ENCODE measurements at regions of chr1 and their contacts with region 1.

Region 1: GRCh38 chr1:108862698-108863477 is 6.0 kb upstream of the AKNAD1 start:
- DNase-seq: no peak
- ATAC-seq: peak; percentile 96
- H3K4me3 Mint-ChIP-seq: no peak overlapping the region
- H3K27ac Mint-ChIP-seq: peak overlapping the region; percentile 81
- H3K4me1 Mint-ChIP-seq: peaks cover 22% of the 10 kb centered on the region
- H3K27me3 Mint-ChIP-seq: peaks cover 1% of the 10 kb centered on the region
- CTCF ChIP-seq: no peak

Region 2: DNA sequence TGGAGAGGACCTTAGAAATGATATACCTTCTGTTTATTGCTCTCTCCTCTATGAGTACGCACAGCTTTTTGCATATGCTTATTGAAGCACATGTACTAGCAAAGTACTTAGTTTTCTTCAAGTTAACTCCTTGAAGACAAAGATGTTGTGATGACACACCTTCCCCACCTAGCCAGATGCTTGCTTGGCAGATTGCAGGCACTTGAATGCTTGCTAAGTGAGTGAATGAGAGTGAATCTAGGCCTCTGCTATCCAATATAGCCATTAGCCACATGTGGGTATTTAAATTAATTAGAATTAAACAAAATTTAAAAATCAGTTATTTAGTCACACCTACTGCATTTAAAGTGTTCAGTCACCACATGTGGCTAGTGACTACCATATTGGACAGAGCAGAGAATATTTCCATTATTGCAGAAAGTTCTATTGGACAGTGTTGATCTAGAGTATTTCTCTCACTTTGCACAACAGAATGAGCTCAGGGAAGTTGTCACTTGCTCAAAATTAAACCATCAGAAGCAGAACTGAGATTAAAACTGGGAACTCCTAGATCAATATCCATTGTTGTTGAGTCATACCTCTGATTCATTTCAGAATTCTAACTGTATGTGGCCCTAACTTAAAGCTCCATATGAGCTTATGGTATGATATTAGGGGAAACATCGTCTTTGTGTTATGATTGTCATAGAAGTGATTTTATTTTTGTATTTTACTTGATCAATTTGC is 311.6 kb before region 1 on chr1:
- CTCF ChIA-PET with region 1: no interaction called
- POLR2A ChIA-PET with region 1: no interaction called
- intact Hi-C with region 1: loop called (anchors 5 kb)
- DNase-seq: no peak
- ATAC-seq: peak; percentile 91
- H3K4me3 Mint-ChIP-seq: no peak overlapping the region
- H3K27ac Mint-ChIP-seq: no peak overlapping the region
- H3K4me1 Mint-ChIP-seq: peaks cover 7% of the 10 kb centered on the region
- H3K27me3 Mint-ChIP-seq: no peaks in the 10 kb centered on the region
- CTCF ChIP-seq: no peak

Region 3: GRCh38 chr1:108816049-108816893 is 46.6 kb before region 1 on chr1:
- CTCF ChIA-PET with region 1: no interaction called
- POLR2A ChIA-PET with region 1: no interaction called
- intact Hi-C with region 1: no loop called
- DNase-seq: no peak
- ATAC-seq: no peak
- H3K4me3 Mint-ChIP-seq: no peak overlapping the region
- H3K27ac Mint-ChIP-seq: no peak overlapping the region
- H3K4me1 Mint-ChIP-seq: no peaks in the 10 kb centered on the region
- H3K27me3 Mint-ChIP-seq: peaks cover 3% of the 10 kb centered on the region
- CTCF ChIP-seq: no peak